GM10248 (cell line): ENCODE measurements at regions of chr6 and their contacts with region 1.

Region 1: GRCh38 chr6:133326584-133326983 is 85.4 kb downstream of the EYA4 start:
- DNase-seq: no peak
- CTCF ChIP-seq: no peak

Region 2: DNA sequence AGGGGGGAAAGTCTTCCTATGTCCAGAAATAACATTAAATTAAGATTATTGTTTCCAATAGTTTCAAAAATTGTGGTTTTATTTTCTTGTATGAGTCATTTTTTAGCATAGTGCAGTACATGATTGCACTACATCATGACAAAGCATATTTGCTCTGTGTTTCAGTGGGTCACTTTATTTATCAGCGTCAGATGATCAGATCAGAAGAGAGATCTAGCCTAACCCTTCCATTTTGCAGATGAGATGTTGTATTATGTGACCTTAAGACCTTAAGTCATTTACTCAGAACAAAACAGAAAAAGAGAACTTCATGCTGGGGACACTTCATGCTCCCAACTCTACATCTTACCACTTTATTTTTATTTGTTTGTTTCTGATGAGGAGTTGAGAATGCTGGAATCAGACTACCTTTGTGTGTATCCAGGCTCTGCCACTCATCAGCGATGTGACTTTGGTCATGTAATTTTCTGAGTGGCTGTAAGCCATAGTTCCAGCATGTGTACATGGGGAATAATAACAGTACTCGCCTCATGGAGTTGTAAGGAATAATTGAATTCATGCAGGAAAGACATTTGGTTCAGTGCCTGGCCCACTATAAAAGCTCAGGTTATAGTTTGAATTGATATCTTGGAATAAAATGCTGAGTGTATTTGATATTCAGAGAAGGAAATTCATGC is 71.9 kb before region 1 on chr6:
- CTCF ChIA-PET with region 1: no interaction called
- POLR2A ChIA-PET with region 1: no interaction called
- DNase-seq: peak; percentile 10
- CTCF ChIP-seq: no peak

Region 3: DNA sequence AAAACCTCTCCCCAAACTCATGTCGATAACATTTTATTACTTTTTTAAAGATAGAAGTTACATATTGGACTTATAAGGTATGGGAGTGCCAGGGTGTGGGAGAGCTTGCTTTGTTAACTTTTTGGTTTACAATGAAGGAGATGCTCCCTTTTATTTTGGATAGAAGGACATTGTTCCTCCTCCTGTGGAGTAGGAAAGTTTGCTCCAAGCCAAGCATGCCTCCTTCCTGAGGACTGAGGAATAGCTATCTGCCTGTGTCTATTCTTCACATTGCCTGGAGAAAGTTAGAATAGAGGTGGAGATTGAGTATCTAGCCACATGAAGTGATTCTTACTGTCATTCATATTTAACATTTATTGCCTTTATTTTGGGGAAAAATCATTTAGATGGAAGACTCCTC is 13.5 kb before region 1 on chr6:
- CTCF ChIA-PET with region 1: interaction called, 13 read pairs
- POLR2A ChIA-PET with region 1: no interaction called
- DNase-seq: no peak
- CTCF ChIP-seq: no peak

Region 4: GRCh38 chr6:134272374-134272773 is 945.8 kb after region 1 on chr6:
- CTCF ChIA-PET with region 1: no interaction called
- POLR2A ChIA-PET with region 1: no interaction called
- DNase-seq: no peak
- CTCF ChIP-seq: no peak